ENCODE measurements at regions of chr11 and their contacts with region 1.

Region 1: GRCh38 chr11:118311518-118311917 is 7.0 kb downstream of the CD3E start:
- DNase-seq: peak in 2 of 9 donors; percentile 22 to 23
- ATAC-seq: no peak
- H3K4me3 ChIP-seq: no peak overlapping the region
- H3K4me3 Mint-ChIP-seq: peak overlapping the region in 7 of 10 donors; percentile 9 to 95 (median 58)
- H3K27ac ChIP-seq: peak overlapping the region; percentile 52
- H3K27ac Mint-ChIP-seq: peak overlapping the region; percentile 36 to 100 (median 93)
- H3K4me1 ChIP-seq: peaks cover 60 to 88% of the 10 kb centered on the region in 2 donors
- H3K4me1 Mint-ChIP-seq: peaks cover 64 to 97% (median 91%) of the 10 kb centered on the region in 7 donors
- H3K27me3 ChIP-seq: no peaks in the 10 kb centered on the region
- H3K27me3 Mint-ChIP-seq: no peaks in the 10 kb centered on the region

Region 2: DNA sequence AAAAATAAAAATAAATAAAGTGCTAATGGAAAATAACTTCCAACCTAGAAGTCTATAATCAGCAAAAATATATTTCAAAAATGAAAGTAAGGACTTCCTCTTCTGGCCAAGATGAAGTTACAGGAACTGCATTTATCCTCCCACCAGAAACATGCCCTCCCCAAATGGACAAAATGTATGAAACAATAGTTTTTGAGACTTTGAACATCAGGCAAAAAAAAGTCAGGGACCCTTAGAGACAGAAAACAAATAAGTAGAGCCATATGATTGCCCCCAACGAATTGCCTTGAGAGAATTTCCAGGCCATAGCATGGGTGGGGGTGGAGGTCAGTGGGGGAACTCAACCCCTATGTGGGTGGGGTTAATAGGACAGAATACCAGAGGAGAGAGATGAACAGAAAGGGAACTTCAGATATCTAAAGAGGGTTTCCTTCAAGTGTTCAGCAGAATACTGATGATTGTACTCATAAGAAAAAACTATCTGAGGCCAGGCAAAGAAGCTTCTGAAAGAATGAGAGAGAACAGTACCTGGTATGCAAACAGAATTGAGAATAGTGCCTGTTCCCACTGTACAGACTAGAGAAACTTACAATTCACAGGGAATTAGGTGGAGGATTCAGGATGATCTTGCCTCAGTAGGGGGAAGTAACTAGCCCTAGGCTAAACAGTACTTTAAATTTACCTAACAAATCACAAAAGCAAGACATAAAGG is 351.9 kb before region 1 on chr11:
- CTCF ChIA-PET with region 1: no interaction called
- POLR2A ChIA-PET with region 1: no interaction called
- intact Hi-C with region 1: no loop called
- DNase-seq: no peak
- ATAC-seq: no peak
- H3K4me3 ChIP-seq: no peak overlapping the region
- H3K4me3 Mint-ChIP-seq: peak overlapping the region in 4 of 10 donors; percentile 12 to 67 (median 42)
- H3K27ac ChIP-seq: no peak overlapping the region
- H3K27ac Mint-ChIP-seq: peak overlapping the region in 3 of 9 donors; percentile 38 to 85 (median 84)
- H3K4me1 ChIP-seq: peaks cover 9 to 10% of the 10 kb centered on the region in 2 donors
- H3K4me1 Mint-ChIP-seq: peaks cover 31 to 76% (median 71%) of the 10 kb centered on the region in 7 donors
- H3K27me3 ChIP-seq: no peaks in the 10 kb centered on the region
- H3K27me3 Mint-ChIP-seq: no peaks in the 10 kb centered on the region

Region 3: GRCh38 chr11:118145285-118146227 is 166.0 kb before region 1 on chr11:
- CTCF ChIA-PET with region 1: no interaction called
- POLR2A ChIA-PET with region 1: no interaction called
- intact Hi-C with region 1: no loop called
- DNase-seq: peak; percentile 76 to 93 (median 81)
- ATAC-seq: peak; percentile 95
- H3K4me3 ChIP-seq: peak overlapping the region; percentile 66
- H3K4me3 Mint-ChIP-seq: peak overlapping the region; percentile 43 to 88 (median 83)
- H3K27ac ChIP-seq: no peak overlapping the region
- H3K27ac Mint-ChIP-seq: peak overlapping the region in 1 of 9 donors; percentile 35
- H3K4me1 ChIP-seq: no peaks in the 10 kb centered on the region
- H3K4me1 Mint-ChIP-seq: peaks cover 0 to 20% (median 5%) of the 10 kb centered on the region in 7 donors
- H3K27me3 ChIP-seq: peaks cover 0 to 5% of the 10 kb centered on the region in 2 donors
- H3K27me3 Mint-ChIP-seq: peaks cover 45 to 78% (median 56%) of the 10 kb centered on the region in 5 donors

Region 4: GRCh38 chr11:118353084-118353710 is 41.7 kb after region 1 on chr11:
- CTCF ChIA-PET with region 1: interaction called, 90 read pairs
- POLR2A ChIA-PET with region 1: no interaction called
- intact Hi-C with region 1: no loop called
- DNase-seq: peak in 7 of 9 donors; percentile 21 to 70 (median 61)
- ATAC-seq: peak; percentile 51
- H3K4me3 ChIP-seq: no peak overlapping the region
- H3K4me3 Mint-ChIP-seq: no peak overlapping the region
- H3K27ac ChIP-seq: peak overlapping the region; percentile 62
- H3K27ac Mint-ChIP-seq: peak overlapping the region; percentile 38 to 96 (median 91)
- H3K4me1 ChIP-seq: peaks cover 13 to 15% of the 10 kb centered on the region in 2 donors
- H3K4me1 Mint-ChIP-seq: peaks cover 5 to 53% (median 35%) of the 10 kb centered on the region in 7 donors
- H3K27me3 ChIP-seq: no peaks in the 10 kb centered on the region
- H3K27me3 Mint-ChIP-seq: no peaks in the 10 kb centered on the region

Measured in naive thymus-derived CD4-positive, alpha-beta T cell (primary cell).